ENCODE measurements at regions of chr17 and their contacts with region 1.

Region 1: GRCh38 chr17:21457051-21458026 is 81.2 kb downstream of the KCNJ12 start:
- DNase-seq: peak; percentile 92
- H3K4me3 ChIP-seq: no peak overlapping the region
- H3K27ac ChIP-seq: no peak overlapping the region
- H3K4me1 ChIP-seq: peaks cover 10% of the 10 kb centered on the region
- H3K27me3 ChIP-seq: no peaks in the 10 kb centered on the region
- CTCF ChIP-seq: peak; percentile 66 to 88

Region 2: DNA sequence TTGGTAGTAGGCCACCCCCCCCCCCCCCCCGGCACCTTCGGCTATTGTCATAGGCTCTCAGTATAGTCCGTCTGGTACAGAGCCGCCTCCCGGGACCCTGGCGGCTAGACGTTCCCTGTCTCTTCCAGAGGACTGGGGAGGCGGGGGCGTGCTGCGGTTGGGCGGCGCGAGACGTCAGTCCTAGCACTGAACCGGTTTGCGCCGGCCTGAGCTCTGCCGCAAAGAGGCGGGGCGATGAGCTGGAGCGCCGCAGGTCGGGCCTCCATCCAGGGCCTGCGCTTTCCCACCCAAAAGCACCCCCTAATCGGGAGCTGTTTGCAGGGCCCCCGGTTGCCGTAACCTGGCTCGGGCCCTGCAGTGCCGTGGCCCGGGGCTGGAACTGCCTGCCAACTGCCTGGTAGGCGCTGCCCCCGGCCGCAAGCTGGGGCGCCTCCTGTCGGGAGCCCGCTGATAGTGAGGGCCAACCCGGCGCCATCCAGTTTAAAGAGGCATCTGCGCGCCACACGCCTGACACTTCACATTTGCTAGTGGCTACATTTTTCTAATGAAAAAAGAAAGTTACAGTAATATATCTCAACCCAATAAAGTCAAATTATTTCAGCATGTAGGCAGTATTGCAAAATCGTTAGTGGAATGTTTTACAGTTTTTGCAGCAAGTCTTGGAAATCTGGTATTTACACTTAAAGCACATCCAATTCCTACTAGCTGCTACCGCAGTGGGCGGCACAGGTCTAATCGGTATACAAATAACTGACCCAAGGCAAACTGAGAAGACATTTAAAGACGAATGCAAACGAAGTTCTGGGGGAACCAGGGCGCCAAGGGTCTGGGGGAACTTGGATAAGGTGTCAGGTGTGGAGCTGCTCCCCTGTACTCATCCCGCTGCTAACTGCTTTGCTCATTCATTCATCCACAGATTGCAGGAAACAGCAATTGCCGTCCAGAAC is 413.8 kb before region 1 on chr17:
- CTCF ChIA-PET with region 1: no interaction called
- dilution Hi-C with region 1: no loop called
- in situ Hi-C with region 1: no loop called
- intact Hi-C with region 1: loop called (anchors 1 kb)
- DNase-seq: peak; percentile 97
- H3K4me3 ChIP-seq: peak overlapping the region; percentile 59 to 78 (median 63)
- H3K27ac ChIP-seq: peak overlapping the region; percentile 55
- H3K4me1 ChIP-seq: peaks cover 20% of the 10 kb centered on the region
- H3K27me3 ChIP-seq: no peaks in the 10 kb centered on the region
- CTCF ChIP-seq: peak; percentile 81 to 91

Region 3: DNA sequence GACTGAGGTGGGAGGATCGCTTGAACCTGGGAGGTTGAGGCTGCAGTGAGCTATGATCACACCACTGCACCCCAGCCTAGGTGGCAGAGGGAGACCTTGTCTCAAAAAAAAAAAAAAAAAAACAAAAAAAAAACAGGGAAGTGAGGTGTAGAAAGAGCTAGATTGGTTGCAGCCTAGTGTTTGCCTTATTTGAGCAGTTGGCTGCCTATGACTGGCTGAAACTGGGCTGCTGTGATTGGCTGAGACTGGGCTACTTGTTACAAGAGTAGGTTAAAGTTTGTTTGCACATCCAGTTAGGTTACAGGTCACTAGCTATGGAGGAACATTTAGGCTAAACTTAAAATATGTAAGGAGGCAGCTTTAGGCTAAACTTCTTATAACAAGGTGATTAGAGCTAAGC is 324.9 kb before region 1 on chr17:
- CTCF ChIA-PET with region 1: interaction called, 20 read pairs
- dilution Hi-C with region 1: no loop called
- in situ Hi-C with region 1: loop called in 1 of 2 experiments (anchors 10 kb)
- intact Hi-C with region 1: loop called (anchors 5 kb)
- DNase-seq: no peak
- H3K4me3 ChIP-seq: no peak overlapping the region
- H3K27ac ChIP-seq: no peak overlapping the region
- H3K4me1 ChIP-seq: peaks cover 9% of the 10 kb centered on the region
- H3K27me3 ChIP-seq: no peaks in the 10 kb centered on the region
- CTCF ChIP-seq: no peak

Region 4: DNA sequence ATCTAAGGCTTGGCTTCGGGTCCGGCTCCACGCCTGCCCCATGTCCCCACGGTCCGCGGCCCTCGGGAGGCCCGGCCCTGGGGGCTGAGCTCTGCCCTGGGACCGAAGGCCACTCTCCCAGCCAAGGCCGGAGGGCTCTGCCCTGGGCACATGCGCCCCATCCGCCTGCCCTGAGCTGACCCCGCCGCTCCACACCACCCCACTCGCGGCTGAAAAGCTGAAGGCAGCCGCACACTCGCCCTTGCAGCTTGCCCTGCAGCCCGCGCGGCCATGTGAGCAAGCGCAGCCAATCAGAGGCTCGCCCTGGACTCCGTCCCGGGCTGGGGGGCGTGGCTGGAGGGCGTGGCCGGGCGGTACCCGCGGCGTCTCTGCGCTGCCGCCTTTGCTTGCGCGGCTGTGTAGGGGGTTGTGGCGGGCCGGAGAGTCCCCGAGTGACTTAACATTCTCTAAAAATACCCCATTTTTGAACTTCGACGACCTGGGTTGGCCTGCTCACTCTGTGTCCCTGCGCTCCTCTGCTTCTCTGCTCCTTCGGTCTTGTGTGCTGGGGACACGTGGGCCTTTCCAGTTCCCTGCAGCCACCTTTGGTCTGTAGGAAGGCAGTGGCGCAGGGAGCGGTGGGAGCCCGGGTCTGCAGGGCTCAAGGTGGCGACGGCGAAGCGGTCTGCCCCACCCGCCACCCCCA is 181.6 kb before region 1 on chr17:
- CTCF ChIA-PET with region 1: no interaction called
- dilution Hi-C with region 1: no loop called
- in situ Hi-C with region 1: loop called in 1 of 2 experiments (anchors 25 kb)
- intact Hi-C with region 1: loop called (anchors 1 kb)
- DNase-seq: peak; percentile 70
- H3K4me3 ChIP-seq: peak overlapping the region; percentile 58 to 66 (median 62)
- H3K27ac ChIP-seq: no peak overlapping the region
- H3K4me1 ChIP-seq: peaks cover 15% of the 10 kb centered on the region
- H3K27me3 ChIP-seq: no peaks in the 10 kb centered on the region
- CTCF ChIP-seq: no peak

Region 5: DNA sequence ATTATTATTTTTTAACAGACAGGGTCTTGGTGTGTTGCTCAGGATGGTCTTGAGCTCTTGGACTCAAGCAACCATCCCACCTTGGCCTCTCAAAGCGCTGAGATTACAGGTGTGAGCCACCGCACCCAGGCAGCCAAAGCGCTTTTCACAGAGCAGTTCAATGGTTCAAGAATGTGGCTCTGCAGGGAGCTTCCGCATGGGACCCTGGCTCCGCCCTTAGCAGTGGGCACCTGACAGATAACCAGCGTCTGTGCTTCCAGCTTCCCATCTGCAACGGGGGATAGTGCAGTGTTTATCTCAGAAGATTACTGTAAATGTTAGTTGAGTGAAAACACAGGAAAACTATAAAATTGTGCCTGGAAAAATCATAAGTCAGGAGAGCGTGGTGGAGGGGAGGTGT is 18.2 kb after region 1 on chr17:
- CTCF ChIA-PET with region 1: no interaction called
- dilution Hi-C with region 1: no loop called
- in situ Hi-C with region 1: no loop called
- intact Hi-C with region 1: no loop called
- DNase-seq: no peak
- H3K4me3 ChIP-seq: no peak overlapping the region
- H3K27ac ChIP-seq: no peak overlapping the region
- H3K4me1 ChIP-seq: no peaks in the 10 kb centered on the region
- H3K27me3 ChIP-seq: peaks cover 4% of the 10 kb centered on the region
- CTCF ChIP-seq: no peak

Region 6: GRCh38 chr17:21511363-21512198 is 54.2 kb after region 1 on chr17:
- CTCF ChIA-PET with region 1: interaction called, 40 read pairs
- dilution Hi-C with region 1: no loop called
- in situ Hi-C with region 1: loop called in 1 of 2 experiments (anchors 10 kb)
- intact Hi-C with region 1: loop called (anchors 1 kb)
- DNase-seq: peak; percentile 66
- H3K4me3 ChIP-seq: peak overlapping the region; percentile 45 to 47 (median 46)
- H3K27ac ChIP-seq: no peak overlapping the region
- H3K4me1 ChIP-seq: peaks cover 13% of the 10 kb centered on the region
- H3K27me3 ChIP-seq: peaks cover 5% of the 10 kb centered on the region
- CTCF ChIP-seq: peak; percentile 28 to 79

Region 7: DNA sequence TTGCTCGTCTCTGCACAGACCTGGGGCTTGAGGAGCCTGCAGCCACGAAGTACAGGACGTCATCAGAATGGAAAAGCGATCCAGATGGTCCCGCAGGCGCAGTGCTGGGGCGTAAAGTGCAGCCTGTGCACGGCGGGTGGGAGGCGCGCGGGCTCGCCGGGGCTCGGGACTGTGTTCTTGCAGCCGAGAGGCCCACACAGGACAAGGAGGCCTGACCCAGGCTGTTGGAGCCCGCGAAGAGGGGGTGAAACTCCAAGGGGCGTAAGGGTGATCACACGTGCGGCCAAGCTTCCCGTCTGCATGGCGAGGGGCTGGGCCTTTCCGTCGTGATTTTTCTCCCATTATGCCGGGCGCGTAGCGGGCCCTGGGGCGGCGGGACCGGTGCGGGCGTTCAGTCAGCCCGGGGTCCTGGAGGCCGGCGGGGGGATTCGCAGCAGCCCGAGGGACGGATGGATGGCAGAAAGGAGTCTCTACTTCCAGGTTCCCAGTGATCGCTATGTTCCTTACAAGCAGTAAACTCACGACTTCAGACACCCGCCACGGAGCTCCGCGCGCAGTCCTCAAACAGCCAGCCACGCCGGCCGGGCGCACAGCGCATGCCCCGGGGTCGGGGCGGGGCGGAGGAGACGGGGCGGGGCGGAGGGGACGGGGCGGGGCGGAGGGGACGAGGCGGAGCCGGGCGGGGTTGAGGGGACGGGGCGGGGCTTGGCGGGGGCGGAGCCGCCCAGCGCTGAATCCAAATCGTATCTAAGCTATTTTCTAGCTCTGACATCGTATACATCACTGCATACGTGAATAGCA is 93.9 kb after region 1 on chr17:
- CTCF ChIA-PET with region 1: no interaction called
- dilution Hi-C with region 1: no loop called
- in situ Hi-C with region 1: no loop called
- intact Hi-C with region 1: loop called (anchors 1 kb)
- DNase-seq: peak; percentile 69
- H3K4me3 ChIP-seq: peak overlapping the region; percentile 70 to 100 (median 81)
- H3K27ac ChIP-seq: peak overlapping the region; percentile 51
- H3K4me1 ChIP-seq: peaks cover 12% of the 10 kb centered on the region
- H3K27me3 ChIP-seq: no peaks in the 10 kb centered on the region
- CTCF ChIP-seq: no peak